ENCODE measurements at regions of chr9 and their contacts with region 1.

Region 1: GRCh38 chr9:77977210-77977611 is 54.4 kb downstream of the GNAQ start:
- DNase-seq: peak in 1 of 2 donors; percentile 34
- H3K4me3 ChIP-seq: no peak overlapping the region
- H3K27ac ChIP-seq: peak overlapping the region; percentile 54 to 55
- H3K4me1 ChIP-seq: peaks cover 0 to 11% of the 10 kb centered on the region in 2 donors
- H3K27me3 ChIP-seq: no peaks in the 10 kb centered on the region
- CTCF ChIP-seq: peak in 2 of 3 donors; percentile 37 to 45
- POLR2A ChIP-seq: no peak

Region 2: GRCh38 chr9:77988630-77989029 is 11.4 kb after region 1 on chr9:
- intact Hi-C with region 1: no loop called
- DNase-seq: no peak
- H3K4me3 ChIP-seq: no peak overlapping the region
- H3K27ac ChIP-seq: no peak overlapping the region
- H3K4me1 ChIP-seq: no peaks in the 10 kb centered on the region
- H3K27me3 ChIP-seq: no peaks in the 10 kb centered on the region
- CTCF ChIP-seq: no peak
- POLR2A ChIP-seq: no peak

Region 3: DNA sequence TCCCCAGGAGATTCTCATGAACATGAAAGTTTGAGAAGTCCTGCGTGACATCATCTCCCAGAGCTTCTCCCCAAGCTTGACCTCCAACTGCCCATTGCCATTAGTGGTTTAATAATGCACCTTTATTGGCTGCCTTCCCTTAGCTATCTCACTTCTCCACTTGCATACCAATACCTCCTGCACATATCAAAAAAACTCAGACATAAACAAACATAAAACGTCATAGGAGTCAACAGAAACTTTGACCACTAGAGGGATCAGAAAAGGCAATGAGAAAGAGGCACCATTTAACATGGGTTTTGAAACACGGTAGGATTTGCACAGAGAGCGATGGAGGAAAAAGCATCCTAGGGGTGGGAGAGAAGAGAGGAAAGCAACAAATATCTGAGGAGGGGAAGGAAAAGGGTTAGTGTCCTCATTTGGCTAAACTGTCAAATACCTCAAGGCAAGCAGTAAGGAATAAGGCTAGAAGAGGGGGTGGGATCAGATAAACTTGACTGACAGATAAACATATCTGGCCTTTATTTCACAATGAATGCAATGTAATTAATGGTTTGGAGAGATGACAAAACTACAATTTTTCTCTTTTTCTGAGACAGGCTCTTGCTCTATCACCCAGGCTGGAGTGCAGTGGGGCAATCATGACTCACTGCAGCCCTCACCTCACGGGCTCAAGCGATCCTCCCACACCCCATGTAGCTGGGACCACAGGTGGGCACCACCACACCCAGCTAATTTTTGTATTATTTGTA is 27.4 kb after region 1 on chr9:
- intact Hi-C with region 1: loop called (anchors 1 kb)
- DNase-seq: no peak
- H3K4me3 ChIP-seq: no peak overlapping the region
- H3K27ac ChIP-seq: no peak overlapping the region
- H3K4me1 ChIP-seq: no peaks in the 10 kb centered on the region
- H3K27me3 ChIP-seq: no peaks in the 10 kb centered on the region
- CTCF ChIP-seq: no peak
- POLR2A ChIP-seq: no peak

Region 4: GRCh38 chr9:78035383-78035993 is 58.3 kb after region 1 on chr9:
- intact Hi-C with region 1: no loop called
- DNase-seq: peak in 1 of 2 donors; percentile 46
- H3K4me3 ChIP-seq: no peak overlapping the region
- H3K27ac ChIP-seq: peak overlapping the region; percentile 39 to 42
- H3K4me1 ChIP-seq: peaks cover 0 to 16% of the 10 kb centered on the region in 2 donors
- H3K27me3 ChIP-seq: no peaks in the 10 kb centered on the region
- CTCF ChIP-seq: peak; percentile 80 to 89 (median 84)
- POLR2A ChIP-seq: no peak

Region 5: DNA sequence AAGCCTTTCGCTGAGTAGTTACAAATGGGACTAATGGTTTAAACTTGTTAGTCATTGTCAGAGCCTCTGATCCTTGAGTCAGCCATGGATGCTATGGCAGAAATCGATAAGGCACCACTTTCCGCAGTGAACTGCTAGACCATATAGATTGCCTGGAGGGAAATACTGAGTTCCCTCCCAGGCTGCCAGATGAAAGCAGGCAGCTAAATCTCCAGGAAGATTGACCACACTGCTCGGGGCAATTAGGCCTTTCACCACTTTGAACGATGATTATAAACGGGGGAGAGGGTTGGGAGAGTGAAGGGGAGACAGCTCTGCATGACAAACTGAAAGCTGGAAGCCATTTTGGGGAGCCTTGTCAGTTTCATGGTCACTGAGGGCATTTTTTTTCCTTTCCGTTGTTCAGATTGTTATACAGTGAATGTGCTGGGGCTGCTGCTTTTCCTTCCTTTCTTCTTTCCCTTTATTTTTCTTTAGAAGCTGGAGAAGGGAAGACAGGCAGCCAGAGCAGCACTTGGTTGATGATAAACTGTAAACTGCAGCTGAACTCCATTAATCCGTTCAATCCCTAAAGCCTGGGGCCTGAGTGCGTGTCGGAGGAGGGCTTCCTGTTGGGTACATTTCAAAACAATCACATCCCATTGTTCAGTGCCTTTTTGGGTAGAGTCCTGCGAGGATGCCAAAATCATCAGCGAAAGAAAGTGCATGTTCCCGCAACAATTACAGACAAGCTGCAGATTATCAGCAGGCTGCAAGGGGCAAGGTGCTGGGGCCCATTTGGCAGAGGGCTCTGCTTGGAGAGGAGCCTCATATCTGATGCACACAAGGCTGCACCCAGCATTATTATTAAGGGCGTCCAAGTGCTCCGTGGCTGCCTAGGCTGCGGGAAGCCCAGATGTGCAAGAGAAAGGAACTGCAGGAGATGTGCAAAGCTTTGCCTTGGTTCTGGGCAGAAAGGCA is 628.1 kb after region 1 on chr9:
- intact Hi-C with region 1: no loop called
- DNase-seq: no peak
- H3K4me3 ChIP-seq: no peak overlapping the region
- H3K27ac ChIP-seq: no peak overlapping the region
- H3K4me1 ChIP-seq: no peaks in the 10 kb centered on the region
- H3K27me3 ChIP-seq: no peaks in the 10 kb centered on the region
- CTCF ChIP-seq: no peak
- POLR2A ChIP-seq: no peak